Activated CD8-positive, alpha-beta T cell treated with anti-CD3 and anti-CD28 coated beads, Interleukin-2, amount 10 ng/mL, durations not matched to agents 7 days and 5 days (primary cell): ENCODE measurements at regions of chr14 and their contacts with region 1.

Region 1: GRCh38 chr14:22549981-22550673 is 38.9 kb downstream of the DAD1 start:
- DNase-seq: peak; percentile 80
- ATAC-seq: peak; percentile 45
- H3K4me3 Mint-ChIP-seq: peak overlapping the region; percentile 76
- H3K27ac Mint-ChIP-seq: peak overlapping the region; percentile 98
- H3K4me1 Mint-ChIP-seq: peaks cover 95% of the 10 kb centered on the region
- H3K27me3 Mint-ChIP-seq: no peaks in the 10 kb centered on the region

Region 2: GRCh38 chr14:22122227-22122818 is 427.8 kb before region 1 on chr14:
- CTCF ChIA-PET with region 1: interaction called, 10 read pairs
- POLR2A ChIA-PET with region 1: interaction called, 3 read pairs
- DNase-seq: peak; percentile 45
- ATAC-seq: peak; percentile 50
- H3K4me3 Mint-ChIP-seq: peak overlapping the region; percentile 79
- H3K27ac Mint-ChIP-seq: peak overlapping the region; percentile 84
- H3K4me1 Mint-ChIP-seq: peaks cover 17% of the 10 kb centered on the region
- H3K27me3 Mint-ChIP-seq: peaks cover 5% of the 10 kb centered on the region

Region 3: GRCh38 chr14:22531451-22532344 is 18.4 kb before region 1 on chr14:
- CTCF ChIA-PET with region 1: interaction called, 60 read pairs
- POLR2A ChIA-PET with region 1: interaction called, 540 read pairs
- DNase-seq: peak; percentile 49
- ATAC-seq: peak; percentile 40
- H3K4me3 Mint-ChIP-seq: peak overlapping the region; percentile 76
- H3K27ac Mint-ChIP-seq: peak overlapping the region; percentile 92
- H3K4me1 Mint-ChIP-seq: peaks cover 89% of the 10 kb centered on the region
- H3K27me3 Mint-ChIP-seq: no peaks in the 10 kb centered on the region

Region 4: DNA sequence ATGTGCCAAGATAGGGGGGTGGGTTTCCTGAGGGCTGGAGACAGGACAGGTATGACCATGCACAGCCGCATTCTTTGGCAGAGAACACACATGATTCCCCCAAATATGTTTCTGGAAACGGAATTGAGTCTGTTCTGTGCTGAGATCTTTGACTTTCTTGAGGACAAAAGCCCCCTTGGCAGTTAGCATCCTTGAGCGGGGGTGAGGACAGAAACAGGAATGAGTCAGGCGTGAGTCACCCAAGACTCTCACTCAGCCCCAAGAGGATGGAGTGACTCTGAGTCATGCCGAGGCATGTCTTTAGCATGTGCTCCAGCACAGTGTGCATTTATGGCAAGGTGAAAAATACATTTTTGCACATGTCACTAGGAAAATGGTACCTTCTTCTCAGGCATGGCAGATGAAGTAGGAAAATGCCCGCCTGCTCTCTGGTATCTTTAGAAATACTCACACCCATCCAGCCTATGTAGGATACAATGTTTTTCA is 13.2 kb before region 1 on chr14:
- CTCF ChIA-PET with region 1: interaction called, 60 read pairs
- POLR2A ChIA-PET with region 1: interaction called, 540 read pairs
- DNase-seq: peak; percentile 87
- ATAC-seq: peak; percentile 85
- H3K4me3 Mint-ChIP-seq: peak overlapping the region; percentile 76
- H3K27ac Mint-ChIP-seq: peak overlapping the region; percentile 98
- H3K4me1 Mint-ChIP-seq: peaks cover 93% of the 10 kb centered on the region
- H3K27me3 Mint-ChIP-seq: no peaks in the 10 kb centered on the region